Calu3 (cell line): ENCODE measurements at regions of chr16 and their contacts with region 1.

Region 1: DNA sequence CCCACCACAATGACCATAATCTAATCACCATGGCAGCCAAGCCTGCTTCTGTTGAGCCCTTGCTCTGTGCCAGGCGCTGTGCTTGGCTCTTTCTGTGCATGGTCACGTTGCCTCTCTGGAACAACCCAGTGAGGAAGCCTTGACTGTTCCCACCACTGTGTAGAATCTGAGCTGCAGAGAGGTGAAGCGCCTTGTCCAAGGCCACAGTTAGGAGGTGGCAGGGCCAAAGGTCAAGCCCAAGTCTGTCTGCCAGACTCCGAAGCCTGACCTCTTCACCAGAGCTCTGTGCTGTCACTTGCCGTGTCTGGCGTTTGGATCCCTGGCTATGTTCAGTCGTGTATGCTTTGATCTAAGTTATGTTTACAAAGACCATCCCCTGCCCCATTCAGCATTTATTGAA is 10.5 kb downstream of the CLEC16A start:
- DNase-seq: no peak
- H3K4me3 Mint-ChIP-seq: no peak overlapping the region
- H3K27ac Mint-ChIP-seq: no peak overlapping the region
- H3K4me1 Mint-ChIP-seq: peaks cover 17% of the 10 kb centered on the region
- H3K27me3 Mint-ChIP-seq: no peaks in the 10 kb centered on the region
- CTCF ChIP-seq: no peak

Region 2: GRCh38 chr16:10944249-10945064 is 10.4 kb before region 1 on chr16 and contains the start of gene CLEC16A:
- CTCF ChIA-PET with region 1: interaction called, 10 read pairs
- intact Hi-C with region 1: no loop called
- DNase-seq: peak; percentile 99
- H3K4me3 Mint-ChIP-seq: peak within 1 kb of the TSS; percentile 96
- H3K27ac Mint-ChIP-seq: peak within 1 kb of the TSS; percentile 10
- H3K4me1 Mint-ChIP-seq: peaks cover 64% of the 10 kb centered on the region
- H3K27me3 Mint-ChIP-seq: no peaks in the 10 kb centered on the region
- CTCF ChIP-seq: no peak
- total RNA-seq, gene CLEC16A: 33.0 and 37.5 TPM in 2 replicates